GM12878 (cell line): ENCODE measurements at regions of chr7 and their contacts with region 1.

Region 1: GRCh38 chr7:26365077-26365900 is 73.6 kb downstream of the SNX10 start:
- DNase-seq: peak; percentile 83
- ATAC-seq: peak; percentile 96
- H3K4me3 ChIP-seq: no peak overlapping the region
- H3K27ac ChIP-seq: peak overlapping the region; percentile 48; the same call in 1 of the 2 replicates
- H3K4me1 ChIP-seq: peaks cover 11% of the 10 kb centered on the region
- H3K27me3 ChIP-seq: no peaks in the 10 kb centered on the region
- CTCF ChIP-seq: peak; percentile 62 to 94 (median 64); a peak in 5 of 6 replicates
- EP300 ChIP-seq: no peak
- POLR2A ChIP-seq: no peak
- RAD21 ChIP-seq: peak; percentile 98

Region 2: DNA sequence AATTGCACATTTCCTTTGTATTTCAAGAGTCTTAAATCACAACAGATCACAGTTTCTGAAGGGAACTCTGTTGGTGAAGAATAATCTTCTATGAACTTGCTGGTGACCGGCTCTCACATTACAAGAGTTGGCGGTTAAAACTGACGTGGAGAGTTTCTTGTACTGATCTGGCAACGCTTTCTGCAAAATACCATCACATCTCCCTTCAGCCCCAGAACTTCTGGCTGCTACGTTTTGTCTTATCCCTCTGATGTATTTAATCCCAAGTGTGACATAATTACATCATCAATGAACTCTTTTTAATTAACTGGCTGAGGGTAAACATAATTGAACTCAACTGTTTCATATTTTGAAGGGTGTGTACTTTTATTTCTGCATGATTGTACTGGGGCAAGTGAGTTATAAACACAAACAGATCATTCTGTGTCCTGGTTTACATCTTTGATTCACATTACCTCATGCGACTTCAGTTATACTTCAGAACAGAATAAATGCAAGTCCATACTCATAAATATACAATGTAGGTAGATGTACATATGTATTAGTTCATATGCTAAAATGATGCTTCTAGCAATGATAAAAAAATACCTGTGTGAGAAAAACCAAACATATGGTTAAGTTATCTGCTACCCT is 1031.9 kb before region 1 on chr7:
- CTCF ChIA-PET with region 1: no interaction called
- POLR2A ChIA-PET with region 1: no interaction called
- RAD21 ChIA-PET with region 1: no interaction called
- SMC1A ChIA-PET with region 1: no interaction called
- in situ Hi-C with region 1: no loop called
- intact Hi-C with region 1: no loop called
- DNase-seq: no peak
- ATAC-seq: no peak
- H3K4me3 ChIP-seq: no peak overlapping the region; the same call in 1 of the 2 replicates
- H3K27ac ChIP-seq: no peak overlapping the region
- H3K4me1 ChIP-seq: no peaks in the 10 kb centered on the region
- H3K27me3 ChIP-seq: no peaks in the 10 kb centered on the region
- CTCF ChIP-seq: no peak
- EP300 ChIP-seq: no peak
- POLR2A ChIP-seq: no peak
- RAD21 ChIP-seq: no peak

Region 3: GRCh38 chr7:25894902-25895791 is 470.1 kb before region 1 on chr7:
- CTCF ChIA-PET with region 1: interaction called, 138 read pairs
- POLR2A ChIA-PET with region 1: interaction called, 5 read pairs
- RAD21 ChIA-PET with region 1: interaction called, 68 read pairs
- SMC1A ChIA-PET with region 1: interaction called, 94 read pairs
- in situ Hi-C with region 1: loop called (anchors 5 kb)
- intact Hi-C with region 1: loop called (anchors 1 kb)
- DNase-seq: peak; percentile 63
- ATAC-seq: peak; percentile 79
- H3K4me3 ChIP-seq: peak overlapping the region; percentile 58
- H3K27ac ChIP-seq: peak overlapping the region; percentile 59
- H3K4me1 ChIP-seq: peaks cover 29% of the 10 kb centered on the region
- H3K27me3 ChIP-seq: no peaks in the 10 kb centered on the region; a peak in 1 of 4 replicates
- CTCF ChIP-seq: peak; percentile 59 to 81 (median 77)
- EP300 ChIP-seq: peak; percentile 81 to 93
- POLR2A ChIP-seq: no peak
- RAD21 ChIP-seq: peak; percentile 53

Region 4: DNA sequence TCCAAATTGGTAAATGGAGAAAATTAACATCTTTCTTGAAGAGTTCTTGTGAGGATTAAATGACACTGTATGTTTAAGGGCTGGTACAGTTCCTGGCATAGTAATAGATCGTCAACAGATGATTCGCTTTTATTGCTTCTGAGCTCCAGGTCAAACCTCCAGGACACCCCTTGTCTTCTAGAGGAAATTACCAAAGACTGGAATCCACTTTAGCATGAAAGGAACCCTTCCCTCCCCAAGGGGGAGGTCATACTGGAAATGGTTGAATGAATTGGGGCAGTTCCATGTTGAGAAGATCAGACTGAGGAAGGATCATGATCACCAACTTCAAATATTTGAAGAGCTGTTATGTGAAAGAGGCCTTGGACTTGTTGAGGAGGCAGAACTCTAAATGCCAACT is 204.4 kb before region 1 on chr7:
- CTCF ChIA-PET with region 1: interaction called, 16 read pairs
- POLR2A ChIA-PET with region 1: no interaction called
- RAD21 ChIA-PET with region 1: interaction called, 4 read pairs
- SMC1A ChIA-PET with region 1: interaction called, 11 read pairs
- in situ Hi-C with region 1: no loop called
- intact Hi-C with region 1: no loop called
- DNase-seq: no peak
- ATAC-seq: no peak
- H3K4me3 ChIP-seq: no peak overlapping the region
- H3K27ac ChIP-seq: no peak overlapping the region
- H3K4me1 ChIP-seq: peaks cover 28% of the 10 kb centered on the region
- H3K27me3 ChIP-seq: no peaks in the 10 kb centered on the region
- CTCF ChIP-seq: no peak
- EP300 ChIP-seq: no peak
- POLR2A ChIP-seq: no peak
- RAD21 ChIP-seq: no peak

Region 5: GRCh38 chr7:26284995-26285632 is 80.2 kb before region 1 on chr7:
- CTCF ChIA-PET with region 1: interaction called, 53 read pairs
- POLR2A ChIA-PET with region 1: interaction called, 3 read pairs
- RAD21 ChIA-PET with region 1: interaction called, 10 read pairs
- SMC1A ChIA-PET with region 1: interaction called, 55 read pairs
- in situ Hi-C with region 1: no loop called
- intact Hi-C with region 1: no loop called
- DNase-seq: no peak
- ATAC-seq: peak; percentile 80
- H3K4me3 ChIP-seq: no peak overlapping the region
- H3K27ac ChIP-seq: no peak overlapping the region
- H3K4me1 ChIP-seq: no peaks in the 10 kb centered on the region
- H3K27me3 ChIP-seq: no peaks in the 10 kb centered on the region
- CTCF ChIP-seq: peak in 2 of 3 experiments; percentile 29 to 30; a peak in 2 of 6 replicates
- EP300 ChIP-seq: no peak
- POLR2A ChIP-seq: no peak
- RAD21 ChIP-seq: peak; percentile 38; the same call in 1 of the 2 replicates

Region 6: GRCh38 chr7:26376175-26376917 is 11.1 kb after region 1 on chr7:
- CTCF ChIA-PET with region 1: interaction called, 20 read pairs
- POLR2A ChIA-PET with region 1: no interaction called
- RAD21 ChIA-PET with region 1: interaction called, 7 read pairs
- SMC1A ChIA-PET with region 1: interaction called, 9 read pairs
- in situ Hi-C with region 1: no loop called
- intact Hi-C with region 1: no loop called
- DNase-seq: no peak
- ATAC-seq: peak; percentile 71
- H3K4me3 ChIP-seq: peak overlapping the region; percentile 63
- H3K27ac ChIP-seq: no peak overlapping the region
- H3K4me1 ChIP-seq: peaks cover 7% of the 10 kb centered on the region
- H3K27me3 ChIP-seq: no peaks in the 10 kb centered on the region
- CTCF ChIP-seq: no peak
- EP300 ChIP-seq: no peak
- POLR2A ChIP-seq: no peak
- RAD21 ChIP-seq: no peak

Region 7: DNA sequence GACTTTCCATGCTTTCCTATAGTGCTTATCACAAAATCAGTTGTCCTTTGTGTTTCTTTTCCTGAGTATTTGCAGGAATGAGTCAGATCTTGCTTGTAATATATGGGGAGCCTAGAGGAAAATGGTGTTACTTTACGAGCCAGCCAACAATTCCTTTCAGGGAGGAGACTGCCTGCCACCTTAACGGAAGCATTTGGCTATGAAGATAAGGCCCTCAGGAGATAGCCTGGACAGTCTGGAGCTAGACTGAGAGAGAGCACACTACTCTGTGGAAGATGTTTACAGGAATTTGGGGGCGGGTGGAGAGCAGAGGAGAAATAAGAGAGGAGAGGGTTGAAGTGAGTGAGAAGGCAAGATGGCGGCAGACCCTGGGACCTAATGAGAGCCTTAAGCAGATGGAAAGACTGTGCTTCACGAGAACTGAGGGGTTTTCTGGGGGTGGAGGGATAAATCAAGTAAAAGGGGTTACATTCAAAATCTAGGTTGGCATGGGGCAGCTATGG is 52.7 kb after region 1 on chr7:
- CTCF ChIA-PET with region 1: no interaction called
- POLR2A ChIA-PET with region 1: no interaction called
- RAD21 ChIA-PET with region 1: no interaction called
- SMC1A ChIA-PET with region 1: no interaction called
- in situ Hi-C with region 1: no loop called
- intact Hi-C with region 1: no loop called
- DNase-seq: no peak
- ATAC-seq: no peak
- H3K4me3 ChIP-seq: no peak overlapping the region
- H3K27ac ChIP-seq: no peak overlapping the region
- H3K4me1 ChIP-seq: no peaks in the 10 kb centered on the region
- H3K27me3 ChIP-seq: peaks cover 0 to 2% of the 10 kb centered on the region in 2 experiments; a peak in 2 of 4 replicates
- CTCF ChIP-seq: no peak
- EP300 ChIP-seq: no peak
- POLR2A ChIP-seq: no peak
- RAD21 ChIP-seq: no peak

Region 8: GRCh38 chr7:26500749-26501352 is 135.6 kb after region 1 on chr7:
- CTCF ChIA-PET with region 1: interaction called, 23 read pairs
- POLR2A ChIA-PET with region 1: no interaction called
- RAD21 ChIA-PET with region 1: interaction called, 20 read pairs
- SMC1A ChIA-PET with region 1: interaction called, 36 read pairs
- in situ Hi-C with region 1: loop called (anchors 5 kb)
- intact Hi-C with region 1: loop called (anchors 1 kb)
- DNase-seq: no peak
- ATAC-seq: peak; percentile 82
- H3K4me3 ChIP-seq: no peak overlapping the region
- H3K27ac ChIP-seq: no peak overlapping the region
- H3K4me1 ChIP-seq: no peaks in the 10 kb centered on the region
- H3K27me3 ChIP-seq: no peaks in the 10 kb centered on the region; a peak in 1 of 4 replicates
- CTCF ChIP-seq: peak; percentile 57 to 60 (median 57)
- EP300 ChIP-seq: no peak
- POLR2A ChIP-seq: no peak
- RAD21 ChIP-seq: peak; percentile 83

Region 9: DNA sequence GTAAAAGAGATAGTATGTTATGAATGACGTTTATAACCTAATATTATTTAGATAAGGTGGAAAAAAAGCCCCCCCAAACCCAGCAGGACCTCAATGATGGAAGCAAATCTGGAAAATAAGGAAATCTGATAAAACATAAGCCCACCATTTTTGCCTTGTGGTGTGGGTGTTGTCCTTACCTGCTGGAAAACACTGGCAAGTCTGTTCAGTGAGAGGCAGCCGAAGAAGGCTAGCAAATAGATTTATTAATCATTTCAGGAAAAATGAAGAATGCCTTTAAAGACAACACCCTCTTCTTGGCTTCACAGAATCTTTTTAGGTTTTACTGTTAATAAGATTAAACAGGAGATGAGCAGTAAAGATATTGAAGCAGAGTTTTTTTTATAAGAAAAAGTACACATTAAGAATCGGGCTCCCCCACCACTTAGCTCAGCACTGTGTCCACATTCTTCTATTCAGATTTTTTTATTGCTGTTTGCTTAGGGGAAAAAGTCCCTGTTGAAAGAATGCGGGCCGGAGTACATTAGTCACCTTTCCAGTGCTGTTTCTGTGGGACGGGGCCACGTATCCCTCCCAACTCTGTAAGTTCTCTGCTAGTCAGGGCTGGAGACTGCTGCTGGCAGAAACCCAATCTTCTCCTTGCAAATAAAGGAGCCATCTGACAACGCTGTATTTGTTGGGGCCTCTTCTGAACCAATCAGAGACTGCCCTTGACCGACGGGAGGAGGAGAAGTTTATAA is 981.4 kb after region 1 on chr7:
- CTCF ChIA-PET with region 1: no interaction called
- POLR2A ChIA-PET with region 1: no interaction called
- RAD21 ChIA-PET with region 1: no interaction called
- SMC1A ChIA-PET with region 1: no interaction called
- in situ Hi-C with region 1: no loop called
- intact Hi-C with region 1: no loop called
- DNase-seq: no peak
- ATAC-seq: no peak
- H3K4me3 ChIP-seq: no peak overlapping the region
- H3K27ac ChIP-seq: no peak overlapping the region
- H3K4me1 ChIP-seq: no peaks in the 10 kb centered on the region
- H3K27me3 ChIP-seq: peaks cover 0 to 7% of the 10 kb centered on the region in 2 experiments; a peak in 1 of 4 replicates
- CTCF ChIP-seq: no peak
- EP300 ChIP-seq: no peak
- POLR2A ChIP-seq: no peak
- RAD21 ChIP-seq: no peak

Region 10: GRCh38 chr7:27375958-27376357 is 1010.7 kb after region 1 on chr7:
- CTCF ChIA-PET with region 1: no interaction called
- POLR2A ChIA-PET with region 1: no interaction called
- RAD21 ChIA-PET with region 1: no interaction called
- SMC1A ChIA-PET with region 1: no interaction called
- in situ Hi-C with region 1: no loop called
- intact Hi-C with region 1: no loop called
- DNase-seq: no peak
- ATAC-seq: no peak
- H3K4me3 ChIP-seq: no peak overlapping the region
- H3K27ac ChIP-seq: no peak overlapping the region
- H3K4me1 ChIP-seq: no peaks in the 10 kb centered on the region
- H3K27me3 ChIP-seq: no peaks in the 10 kb centered on the region; a peak in 1 of 4 replicates
- CTCF ChIP-seq: no peak
- EP300 ChIP-seq: no peak
- POLR2A ChIP-seq: no peak
- RAD21 ChIP-seq: no peak